ENCODE measurements at regions of chr12 and their contacts with region 1.

Region 1: GRCh38 chr12:70637303-70637702 is at the start of gene PTPRB:
- DNase-seq: peak; percentile 85
- H3K4me3 ChIP-seq: peak within 1 kb of the TSS; percentile 63 to 100 (median 99)
- H3K27ac ChIP-seq: peak within 1 kb of the TSS; percentile 100
- H3K4me1 ChIP-seq: peaks cover 52% of the 10 kb centered on the region
- H3K27me3 ChIP-seq: no peaks in the 10 kb centered on the region
- CTCF ChIP-seq: no peak
- POLR2A ChIP-seq: peak; percentile 45
- total RNA-seq, gene PTPRB: 150 and 151 TPM in 2 replicates

Region 2: DNA sequence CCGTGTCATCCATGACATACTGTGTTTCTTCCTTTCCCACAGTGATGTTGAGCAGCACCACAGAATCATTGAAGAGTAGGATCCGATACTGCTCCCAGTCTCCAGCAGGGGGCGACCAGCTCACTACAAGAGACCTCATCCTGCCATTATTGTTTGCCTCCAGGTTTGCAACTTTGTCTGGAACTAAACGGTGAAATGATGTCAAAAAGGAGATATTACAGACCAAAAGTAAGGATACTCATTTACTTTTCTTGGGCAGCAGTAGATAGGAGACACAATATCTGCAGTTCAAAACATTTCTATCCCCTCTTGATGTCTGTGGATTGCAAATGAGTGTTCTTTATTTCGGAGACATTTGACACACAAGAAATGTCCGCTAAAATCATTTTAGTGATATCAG is 47.3 kb before region 1 on chr12:
- CTCF ChIA-PET with region 1: interaction called, 9 read pairs
- POLR2A ChIA-PET with region 1: no interaction called
- dilution Hi-C with region 1: no loop called
- intact Hi-C with region 1: loop called (anchors 2 kb)
- DNase-seq: peak; percentile 80
- H3K4me3 ChIP-seq: no peak overlapping the region
- H3K27ac ChIP-seq: no peak overlapping the region
- H3K4me1 ChIP-seq: no peaks in the 10 kb centered on the region
- H3K27me3 ChIP-seq: no peaks in the 10 kb centered on the region
- CTCF ChIP-seq: peak; percentile 82 to 88
- POLR2A ChIP-seq: no peak

Region 3: GRCh38 chr12:70598467-70599193 is 38.7 kb before region 1 on chr12:
- CTCF ChIA-PET with region 1: interaction called, 4 read pairs
- POLR2A ChIA-PET with region 1: no interaction called
- dilution Hi-C with region 1: no loop called
- intact Hi-C with region 1: loop called (anchors 2 kb)
- DNase-seq: peak; percentile 96
- H3K4me3 ChIP-seq: peak overlapping the region in 1 of 3 experiments; percentile 40
- H3K27ac ChIP-seq: peak overlapping the region; percentile 92
- H3K4me1 ChIP-seq: peaks cover 48% of the 10 kb centered on the region
- H3K27me3 ChIP-seq: no peaks in the 10 kb centered on the region
- CTCF ChIP-seq: no peak
- POLR2A ChIP-seq: peak; percentile 32

Region 4: GRCh38 chr12:70609711-70610491 is 27.4 kb before region 1 on chr12:
- CTCF ChIA-PET with region 1: interaction called, 11 read pairs
- POLR2A ChIA-PET with region 1: interaction called, 4 read pairs
- dilution Hi-C with region 1: no loop called
- intact Hi-C with region 1: loop called (anchors 2 kb)
- DNase-seq: peak; percentile 79
- H3K4me3 ChIP-seq: peak overlapping the region; percentile 33 to 49 (median 37)
- H3K27ac ChIP-seq: peak overlapping the region; percentile 77
- H3K4me1 ChIP-seq: peaks cover 67% of the 10 kb centered on the region
- H3K27me3 ChIP-seq: no peaks in the 10 kb centered on the region
- CTCF ChIP-seq: no peak
- POLR2A ChIP-seq: peak; percentile 45

Region 5: DNA sequence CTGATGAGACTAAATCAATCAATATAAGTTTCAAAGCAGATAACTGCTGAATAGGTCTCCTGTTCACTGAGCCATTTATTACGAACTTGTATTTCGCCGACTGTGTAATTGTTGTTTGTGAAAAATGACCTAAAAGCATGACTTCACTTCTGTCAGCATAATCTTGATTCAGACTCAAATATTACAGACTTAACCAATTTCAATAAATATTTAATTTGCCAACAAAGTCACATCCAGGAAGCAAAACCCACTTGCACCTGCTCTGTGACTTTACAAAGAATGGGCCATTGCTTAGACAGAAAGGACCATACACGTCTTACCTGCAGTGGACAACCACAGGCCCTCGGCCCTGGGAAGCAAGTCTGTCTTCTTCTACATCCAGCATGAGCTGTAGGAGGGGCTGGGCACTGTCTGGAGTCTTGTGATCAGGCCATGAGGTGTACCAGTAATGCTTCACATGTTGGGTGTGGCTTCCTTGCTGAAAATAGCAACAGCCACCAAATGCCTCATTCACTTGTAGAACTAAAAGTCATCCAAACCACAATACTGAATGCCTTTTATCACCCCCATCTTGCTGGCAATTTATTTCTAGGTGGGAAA is 23.4 kb after region 1 on chr12:
- CTCF ChIA-PET with region 1: interaction called, 5 read pairs
- POLR2A ChIA-PET with region 1: no interaction called
- dilution Hi-C with region 1: no loop called
- intact Hi-C with region 1: loop called (anchors 1 kb)
- DNase-seq: peak; percentile 57
- H3K4me3 ChIP-seq: no peak overlapping the region
- H3K27ac ChIP-seq: peak overlapping the region; percentile 97
- H3K4me1 ChIP-seq: peaks cover 40% of the 10 kb centered on the region
- H3K27me3 ChIP-seq: no peaks in the 10 kb centered on the region
- CTCF ChIP-seq: no peak
- POLR2A ChIP-seq: no peak

Region 6: DNA sequence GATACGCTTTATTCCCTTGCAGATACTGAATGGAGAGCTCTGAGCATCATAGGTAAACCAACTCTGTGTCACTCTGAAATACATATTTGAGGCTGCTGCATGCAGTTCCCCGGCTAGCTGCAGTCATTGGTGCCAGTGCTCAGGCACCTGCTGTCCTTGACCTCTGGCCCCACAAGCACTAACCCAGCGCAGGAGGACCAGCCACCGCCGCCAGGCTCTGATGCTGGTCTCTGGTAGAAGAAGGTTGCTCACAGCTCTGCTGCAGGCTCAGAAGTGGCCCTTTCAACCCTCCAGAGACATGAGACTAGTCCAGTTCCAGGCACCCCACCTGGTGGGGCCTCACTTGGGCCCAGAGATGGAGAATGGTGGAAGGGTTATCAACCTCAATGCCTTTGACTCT is 34.4 kb after region 1 on chr12:
- CTCF ChIA-PET with region 1: no interaction called
- POLR2A ChIA-PET with region 1: no interaction called
- dilution Hi-C with region 1: no loop called
- intact Hi-C with region 1: loop called (anchors 2 kb)
- DNase-seq: no peak
- H3K4me3 ChIP-seq: no peak overlapping the region
- H3K27ac ChIP-seq: peak overlapping the region; percentile 39
- H3K4me1 ChIP-seq: peaks cover 12% of the 10 kb centered on the region
- H3K27me3 ChIP-seq: no peaks in the 10 kb centered on the region
- CTCF ChIP-seq: no peak
- POLR2A ChIP-seq: no peak